ENCODE measurements at regions of chr3 and their contacts with region 1.

Region 1: DNA sequence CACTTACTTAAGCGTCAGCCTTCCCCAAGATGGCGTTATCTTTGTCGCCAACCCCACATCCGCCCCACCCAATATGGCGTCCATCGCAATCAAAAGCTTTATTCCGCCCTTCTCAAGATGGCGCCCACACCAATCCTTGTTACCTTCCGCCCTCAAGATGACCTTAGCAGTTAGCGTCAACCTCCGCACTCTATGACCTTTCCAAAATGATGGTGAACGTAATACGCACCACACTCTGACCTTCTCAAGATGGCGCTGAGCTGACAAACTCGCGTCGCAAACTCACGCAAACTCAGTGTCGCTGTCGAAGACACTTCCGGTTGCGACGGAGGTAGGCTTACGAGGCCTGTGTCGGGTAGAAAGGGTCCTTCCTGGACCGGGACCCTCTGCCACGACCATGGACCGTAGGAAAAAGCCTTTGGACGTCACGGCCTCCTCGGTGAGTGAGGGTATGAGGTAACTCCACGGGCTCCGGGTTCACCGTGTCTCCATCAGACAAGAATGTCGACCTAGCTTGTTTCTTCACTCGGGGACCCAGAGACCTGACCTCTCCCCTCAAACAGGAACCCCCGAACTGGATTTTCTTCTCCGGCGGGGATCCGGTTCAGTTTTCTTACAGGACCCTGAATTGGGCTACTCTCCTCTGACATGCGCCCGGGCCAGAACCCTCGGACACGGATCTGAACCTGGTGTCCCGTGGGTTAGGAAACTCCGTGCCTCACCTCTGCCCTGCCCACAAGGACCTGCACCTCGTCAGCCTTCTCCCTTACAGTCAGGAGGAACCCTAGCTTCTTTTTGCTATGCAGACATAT is at the start of gene CCDC174:
- DNase-seq: peak; percentile 95 to 98
- ATAC-seq: peak; percentile 99 to 100
- H3K4me3 ChIP-seq: peak within 1 kb of the TSS; percentile 67 to 85 (median 78)
- H3K27ac ChIP-seq: peak within 1 kb of the TSS; percentile 89 to 96 (median 90)
- H3K4me1 ChIP-seq: peaks cover 21 to 26% of the 10 kb centered on the region in 2 donors
- H3K27me3 ChIP-seq: no peaks in the 10 kb centered on the region
- CTCF ChIP-seq: no peak
- POLR2A ChIP-seq: peak; percentile 72 to 88
- total RNA-seq, gene CCDC174: 11.1 to 22.2 (median 14.8) TPM

Region 2: DNA sequence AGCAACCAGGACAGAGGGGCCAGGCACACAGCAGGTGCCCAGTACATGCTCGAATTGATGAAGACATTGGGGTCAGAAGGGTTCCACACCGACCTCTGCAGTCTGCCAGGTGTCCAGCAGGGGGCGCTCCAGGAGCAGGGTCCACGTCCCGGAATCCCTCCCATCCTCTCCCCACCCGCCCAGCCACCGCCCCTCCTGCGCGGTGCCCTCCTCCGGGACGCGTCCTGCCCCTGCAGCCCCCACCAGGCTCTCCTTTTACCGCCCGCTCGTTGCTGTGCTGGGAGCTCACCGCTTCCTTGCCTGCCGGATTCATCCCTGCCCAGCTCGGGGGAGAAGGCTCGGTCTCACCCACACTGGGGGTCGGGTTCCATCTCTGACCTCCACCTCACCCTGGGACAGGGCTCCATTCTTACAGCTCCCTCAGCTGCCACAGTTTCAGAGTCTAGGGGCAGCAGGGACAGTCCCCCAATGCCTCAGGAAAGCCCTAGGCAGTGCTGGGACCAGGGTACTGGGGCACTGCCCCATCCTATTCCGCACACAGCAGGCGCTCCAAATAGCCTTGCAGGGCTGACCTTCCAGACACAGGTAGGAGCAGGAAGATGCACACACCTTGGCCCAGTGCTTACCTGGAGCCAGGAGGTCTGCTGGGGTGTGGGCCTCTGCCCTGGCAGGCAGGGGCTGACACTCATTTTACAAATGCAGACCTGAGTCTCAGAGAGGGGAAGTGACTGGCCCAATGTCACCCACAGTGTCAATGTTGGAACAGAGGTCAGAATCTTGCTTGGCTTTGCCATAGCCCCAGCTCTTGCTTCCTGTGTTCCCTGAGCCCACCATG is 142.5 kb before region 1 on chr3:
- in situ Hi-C with region 1: no loop called
- intact Hi-C with region 1: loop called (anchors 5 kb)
- DNase-seq: peak in 1 of 2 donors; percentile 55
- ATAC-seq: peak; percentile 52 to 75
- H3K4me3 ChIP-seq: no peak overlapping the region
- H3K27ac ChIP-seq: peak overlapping the region; percentile 11 to 59 (median 40)
- H3K4me1 ChIP-seq: peaks cover 0 to 4% of the 10 kb centered on the region in 2 donors
- H3K27me3 ChIP-seq: no peaks in the 10 kb centered on the region
- CTCF ChIP-seq: peak; percentile 90 to 98 (median 96)
- POLR2A ChIP-seq: no peak

Region 3: DNA sequence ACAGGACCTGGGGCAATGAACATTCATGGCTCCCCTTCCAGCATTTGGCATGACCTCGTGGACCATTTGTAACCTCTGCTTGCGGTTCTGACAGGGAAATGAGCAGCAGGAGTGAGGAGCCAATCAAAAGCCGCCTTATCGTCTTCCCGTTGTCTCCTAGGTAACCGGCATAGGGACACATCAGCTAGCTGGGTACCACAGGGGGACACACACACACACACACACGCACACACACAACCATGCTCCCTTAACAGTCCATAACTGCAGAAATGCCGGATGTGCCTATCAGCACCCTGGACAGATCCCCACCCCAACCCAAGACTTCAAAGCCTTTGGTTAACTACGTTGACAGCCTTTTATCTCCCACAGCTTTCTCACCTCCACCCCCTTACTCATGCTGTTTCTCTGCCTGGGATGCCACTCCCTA is 53.5 kb before region 1 on chr3:
- in situ Hi-C with region 1: no loop called
- intact Hi-C with region 1: no loop called
- DNase-seq: no peak
- ATAC-seq: no peak
- H3K4me3 ChIP-seq: no peak overlapping the region
- H3K27ac ChIP-seq: no peak overlapping the region
- H3K4me1 ChIP-seq: no peaks in the 10 kb centered on the region
- H3K27me3 ChIP-seq: peaks cover 12 to 22% (median 21%) of the 10 kb centered on the region in 3 donors
- CTCF ChIP-seq: no peak
- POLR2A ChIP-seq: no peak

Region 4: DNA sequence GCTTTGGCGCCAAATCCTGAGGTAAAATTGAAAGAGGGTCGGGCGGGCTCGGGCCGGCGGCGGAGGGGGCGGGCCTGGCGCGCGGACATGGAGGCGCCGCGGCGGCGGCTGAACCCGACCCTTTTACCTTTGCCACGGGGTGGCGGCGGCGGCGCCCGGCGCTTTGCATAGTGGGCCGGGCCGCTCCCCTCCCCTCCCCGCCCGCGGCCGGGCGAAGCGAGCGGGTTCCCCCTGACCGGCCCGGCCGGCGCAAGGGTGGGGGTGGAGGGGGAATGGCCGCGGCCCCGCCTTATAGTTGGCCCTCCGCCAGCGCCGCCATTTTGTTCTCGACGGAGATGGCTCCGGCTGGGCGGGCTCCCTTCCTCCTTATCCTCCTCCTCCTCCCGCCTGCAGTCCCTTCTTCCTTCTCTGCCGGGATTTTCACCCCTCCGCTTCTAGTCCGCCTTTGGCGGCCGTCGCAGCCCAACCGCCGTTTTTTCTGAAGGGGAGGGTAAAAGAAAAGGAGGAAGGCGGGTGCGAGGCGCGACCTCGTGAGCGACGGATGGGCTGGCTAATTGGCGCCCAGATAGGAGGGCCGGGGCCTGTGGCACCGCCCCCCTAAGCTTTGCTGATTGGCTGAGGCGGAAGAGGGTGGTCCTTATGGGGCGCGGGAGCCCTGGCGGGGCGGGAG is 296.4 kb after region 1 on chr3:
- in situ Hi-C with region 1: no loop called
- intact Hi-C with region 1: loop called (anchors 1 kb)
- DNase-seq: peak; percentile 97
- ATAC-seq: peak; percentile 86 to 88
- H3K4me3 ChIP-seq: peak overlapping the region; percentile 66 to 98 (median 80)
- H3K27ac ChIP-seq: peak overlapping the region; percentile 96 to 99 (median 99)
- H3K4me1 ChIP-seq: peaks cover 34 to 42% of the 10 kb centered on the region in 2 donors
- H3K27me3 ChIP-seq: no peaks in the 10 kb centered on the region
- CTCF ChIP-seq: peak in 1 of 5 experiments; percentile 16
- POLR2A ChIP-seq: peak in 1 of 2 donors; percentile 1

Region 5: DNA sequence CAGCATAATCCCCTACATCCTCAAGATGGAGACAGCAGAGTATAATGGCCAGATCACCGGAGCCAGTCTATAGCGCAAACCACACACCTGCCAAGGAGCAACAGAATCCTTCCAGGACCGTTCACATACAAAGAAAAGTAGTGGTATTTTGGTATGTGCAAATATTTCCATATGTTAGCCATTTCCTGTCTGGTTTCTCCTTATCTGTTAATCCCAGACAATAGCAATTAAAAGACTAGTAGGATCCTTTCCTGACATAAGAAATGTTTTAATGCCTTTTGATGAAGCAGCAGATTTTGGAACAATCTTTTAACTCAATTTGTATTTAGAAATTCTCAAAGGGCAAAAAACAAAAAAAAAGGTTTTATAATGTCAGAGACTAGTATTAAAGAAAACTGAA is 391.3 kb after region 1 on chr3:
- in situ Hi-C with region 1: loop called in 1 of 4 experiments (anchors 25 kb)
- intact Hi-C with region 1: no loop called
- DNase-seq: no peak
- ATAC-seq: no peak
- H3K4me3 ChIP-seq: no peak overlapping the region
- H3K27ac ChIP-seq: peak overlapping the region in 1 of 4 donors; percentile 14
- H3K4me1 ChIP-seq: no peaks in the 10 kb centered on the region
- H3K27me3 ChIP-seq: no peaks in the 10 kb centered on the region
- CTCF ChIP-seq: no peak
- POLR2A ChIP-seq: no peak

Region 6: GRCh38 chr3:15064835-15065549 is 413.3 kb after region 1 on chr3 and contains the start of gene MRPS25:
- in situ Hi-C with region 1: loop called in 2 of 4 experiments (anchors 25 kb)
- intact Hi-C with region 1: no loop called
- DNase-seq: peak; percentile 87 to 91
- ATAC-seq: peak; percentile 93 to 94
- H3K4me3 ChIP-seq: peak within 1 kb of the TSS; percentile 74 to 99 (median 85)
- H3K27ac ChIP-seq: peak within 1 kb of the TSS; percentile 83 to 97 (median 94)
- H3K4me1 ChIP-seq: peaks cover 18 to 20% of the 10 kb centered on the region in 2 donors
- H3K27me3 ChIP-seq: no peaks in the 10 kb centered on the region
- CTCF ChIP-seq: no peak
- POLR2A ChIP-seq: peak; percentile 94
- total RNA-seq, gene MRPS25: 71.4 to 88.6 (median 73.9) TPM